A673 (cell line): ENCODE measurements at regions of chr2 and their contacts with region 1.

Region 1: GRCh38 chr2:190050003-190050402 is 12.5 kb downstream of the MSTN start:
- DNase-seq: no peak
- H3K4me3 ChIP-seq: no peak overlapping the region
- H3K27ac ChIP-seq: no peak overlapping the region
- H3K4me1 ChIP-seq: no peaks in the 10 kb centered on the region
- H3K27me3 ChIP-seq: no peaks in the 10 kb centered on the region
- CTCF ChIP-seq: no peak

Region 2: DNA sequence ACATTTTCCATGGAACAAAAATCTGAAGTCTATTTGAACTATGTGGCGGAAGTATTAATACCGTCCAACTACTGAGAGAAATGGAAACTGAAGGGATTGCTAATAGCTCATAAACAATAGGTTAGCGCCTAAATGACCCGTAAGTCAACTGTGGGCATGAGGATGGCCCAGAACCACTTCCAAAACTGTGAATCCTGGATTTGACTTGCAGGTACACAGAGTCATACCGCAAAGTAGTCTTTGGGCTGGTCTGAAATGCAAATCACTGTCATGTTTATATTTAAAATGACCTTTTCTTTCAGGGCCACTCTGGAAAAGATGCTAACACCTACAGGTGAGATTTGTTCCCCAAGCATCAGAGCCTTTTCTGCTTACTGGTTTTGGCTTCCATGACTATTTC is 1050.2 kb after region 1 on chr2:
- CTCF ChIA-PET with region 1: no interaction called
- POLR2A ChIA-PET with region 1: interaction called, 13 read pairs
- intact Hi-C with region 1: no loop called
- DNase-seq: no peak
- H3K4me3 ChIP-seq: no peak overlapping the region
- H3K27ac ChIP-seq: no peak overlapping the region
- H3K4me1 ChIP-seq: no peaks in the 10 kb centered on the region
- H3K27me3 ChIP-seq: no peaks in the 10 kb centered on the region
- CTCF ChIP-seq: no peak